ENCODE measurements at regions of chr2 and their contacts with region 1.

Region 1: GRCh38 chr2:21220930-21221329 is 97.2 kb downstream of the TDRD15 start:
- DNase-seq: peak; percentile 51
- ATAC-seq: no peak
- H3K4me3 ChIP-seq: peak overlapping the region in 1 of 2 donors; percentile 48
- H3K27ac ChIP-seq: no peak overlapping the region
- H3K4me1 ChIP-seq: peaks cover 2% of the 10 kb centered on the region in 2 donors
- H3K27me3 ChIP-seq: no peaks in the 10 kb centered on the region

Region 2: GRCh38 chr2:21175895-21176646 is 44.9 kb before region 1 on chr2:
- intact Hi-C with region 1: loop called in 1 of 2 experiments (anchors 5 kb)
- DNase-seq: no peak
- ATAC-seq: no peak
- H3K4me3 ChIP-seq: peak overlapping the region; percentile 18 to 26
- H3K27ac ChIP-seq: peak overlapping the region in 1 of 2 donors; percentile 57
- H3K4me1 ChIP-seq: no peaks in the 10 kb centered on the region
- H3K27me3 ChIP-seq: no peaks in the 10 kb centered on the region

Region 3: DNA sequence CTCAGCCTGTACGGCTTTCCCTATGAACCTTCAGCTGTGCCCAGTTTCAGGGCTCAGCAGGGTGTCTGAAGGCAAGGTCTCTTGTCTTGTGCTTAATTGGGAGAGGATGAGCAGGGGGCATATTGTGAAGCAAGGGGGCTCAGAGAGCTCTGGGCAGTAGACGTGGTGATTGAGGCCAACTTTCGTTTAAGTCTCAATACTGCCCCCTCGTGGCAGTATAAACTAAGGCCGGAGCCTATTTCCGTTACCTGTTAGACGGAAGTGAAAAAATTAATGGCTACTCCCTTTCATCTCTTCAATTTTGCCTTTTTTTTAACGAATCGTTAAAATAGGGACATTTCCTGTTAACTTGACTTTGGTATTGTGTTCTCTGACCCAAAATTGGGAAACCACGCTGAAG is 96.2 kb after region 1 on chr2:
- intact Hi-C with region 1: loop called in 1 of 2 experiments (anchors 2 kb)
- DNase-seq: peak in 1 of 2 donors; percentile 54
- ATAC-seq: no peak
- H3K4me3 ChIP-seq: no peak overlapping the region
- H3K27ac ChIP-seq: no peak overlapping the region
- H3K4me1 ChIP-seq: peaks cover 0 to 4% of the 10 kb centered on the region in 2 donors
- H3K27me3 ChIP-seq: no peaks in the 10 kb centered on the region